Activated naive CD4-positive, alpha-beta T cell treated with anti-CD3 and anti-CD28 coated beads for 36 hours (primary cell): ENCODE measurements at regions of chr6 and their contacts with region 1.

Region 1: DNA sequence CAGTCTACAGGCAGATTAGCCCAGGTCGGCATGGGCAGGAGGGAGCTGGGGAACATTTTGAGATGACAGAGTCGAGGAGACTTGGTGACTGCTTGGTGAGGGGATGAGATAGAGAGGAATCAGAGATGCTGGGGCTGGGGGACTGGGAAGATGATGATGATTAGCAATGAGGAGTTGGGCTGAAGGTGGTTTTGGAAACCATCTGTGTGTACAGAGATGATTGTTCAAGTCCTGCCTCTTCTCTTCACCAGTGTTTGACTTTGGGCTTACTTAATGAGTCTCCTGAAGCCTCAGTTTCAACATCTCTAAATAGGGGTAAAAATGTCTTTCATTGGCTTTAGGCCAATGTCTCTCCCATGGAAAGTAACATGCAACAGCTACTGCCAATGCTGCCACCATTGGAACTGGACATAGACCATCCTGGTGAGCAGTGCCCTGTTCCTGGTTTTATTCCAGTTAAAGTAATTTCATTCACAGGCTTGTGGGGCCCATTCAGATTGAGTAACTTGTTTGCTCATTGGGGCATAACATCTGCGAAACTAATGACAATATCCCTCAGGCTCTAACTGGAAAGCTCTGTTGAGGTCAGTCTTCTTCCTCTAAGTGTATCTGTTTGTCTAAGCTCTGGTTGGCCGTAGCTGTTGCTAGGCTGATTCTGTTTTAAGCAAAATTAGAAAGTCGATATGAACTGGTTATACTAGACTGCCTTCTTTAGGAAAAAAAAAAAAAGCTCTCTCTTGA is 99.1 kb downstream of the ARMC2 start:
- DNase-seq: no peak
- H3K4me3 Mint-ChIP-seq: no peak overlapping the region
- H3K27ac Mint-ChIP-seq: no peak overlapping the region
- H3K4me1 Mint-ChIP-seq: peaks cover 27% of the 10 kb centered on the region
- H3K27me3 Mint-ChIP-seq: no peaks in the 10 kb centered on the region

Region 2: DNA sequence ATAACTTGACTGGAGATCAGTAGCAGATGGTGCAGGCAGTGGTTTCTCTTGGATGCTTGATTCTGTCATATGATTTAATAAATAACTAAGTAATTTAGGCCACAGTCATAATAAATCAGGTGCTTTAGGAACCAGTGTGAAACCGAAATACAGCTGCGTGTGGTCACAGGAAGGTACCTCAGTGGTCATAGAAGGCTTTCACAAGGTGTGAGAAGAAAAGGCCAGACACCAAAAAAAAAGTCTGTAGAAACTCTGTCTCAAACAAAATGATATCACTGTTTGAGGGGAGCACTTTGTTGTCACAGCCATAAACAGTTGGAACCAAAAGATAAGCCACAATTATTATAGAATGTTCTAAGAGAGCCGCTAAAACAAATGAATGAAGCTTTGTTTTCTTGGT is 42.5 kb before region 1 on chr6:
- CTCF ChIA-PET with region 1: interaction called, 4 read pairs
- intact Hi-C with region 1: loop called (anchors 2 kb)
- DNase-seq: no peak
- H3K4me3 Mint-ChIP-seq: no peak overlapping the region
- H3K27ac Mint-ChIP-seq: no peak overlapping the region
- H3K4me1 Mint-ChIP-seq: peaks cover 14% of the 10 kb centered on the region
- H3K27me3 Mint-ChIP-seq: no peaks in the 10 kb centered on the region

Region 3: DNA sequence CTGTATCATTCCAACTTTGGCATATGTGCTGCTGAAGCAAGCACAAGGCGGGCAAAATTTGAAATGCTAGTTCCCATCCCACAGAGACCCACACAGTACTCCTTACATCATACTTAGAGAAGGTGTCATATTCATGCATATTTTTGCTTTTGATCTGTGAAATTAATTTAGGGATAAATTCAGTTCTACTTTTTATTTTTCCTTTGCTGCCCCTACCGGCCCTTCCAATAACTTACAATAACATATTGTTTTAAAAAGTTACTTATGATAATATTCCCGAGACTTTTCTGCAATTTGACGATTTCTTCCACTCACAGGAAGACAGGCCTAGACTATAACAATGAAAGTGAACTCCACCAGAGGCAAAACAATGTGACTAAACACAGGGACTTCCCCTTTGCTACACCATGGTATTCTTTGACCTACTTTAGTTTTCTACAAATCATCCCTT is 112.3 kb after region 1 on chr6:
- CTCF ChIA-PET with region 1: no interaction called
- intact Hi-C with region 1: loop called (anchors 5 kb)
- DNase-seq: peak; percentile 19
- H3K4me3 Mint-ChIP-seq: peak overlapping the region; percentile 35
- H3K27ac Mint-ChIP-seq: peak overlapping the region; percentile 55
- H3K4me1 Mint-ChIP-seq: peaks cover 40% of the 10 kb centered on the region
- H3K27me3 Mint-ChIP-seq: no peaks in the 10 kb centered on the region